B cell (primary cell): ENCODE measurements at regions of chr18 and their contacts with region 1.

Region 1: GRCh38 chr18:12990967-12991838 is at the start of gene CEP192:
- DNase-seq: peak; percentile 98
- ATAC-seq: peak; percentile 98
- H3K4me3 ChIP-seq: peak within 1 kb of the TSS; percentile 63 to 97 (median 84)
- H3K4me3 Mint-ChIP-seq: peak within 1 kb of the TSS; percentile 99
- H3K27ac ChIP-seq: peak within 1 kb of the TSS; percentile 67 to 88
- H3K27ac Mint-ChIP-seq: peak within 1 kb of the TSS; percentile 97
- H3K4me1 ChIP-seq: peaks cover 19 to 25% of the 10 kb centered on the region in 2 donors
- H3K4me1 Mint-ChIP-seq: peaks cover 36% of the 10 kb centered on the region
- H3K27me3 ChIP-seq: no peaks in the 10 kb centered on the region
- H3K27me3 Mint-ChIP-seq: no peaks in the 10 kb centered on the region
- CTCF ChIP-seq: peak; percentile 36
- total RNA-seq, gene CEP192: 44.3 and 47.3 TPM in 2 replicates

Region 2: GRCh38 chr18:12376718-12377555 is 614.3 kb before region 1 on chr18 and contains the start of gene AFG3L2:
- CTCF ChIA-PET with region 1: interaction called, 4 read pairs
- POLR2A ChIA-PET with region 1: no interaction called
- intact Hi-C with region 1: loop called (anchors 1 kb)
- DNase-seq: peak; percentile 100
- ATAC-seq: peak; percentile 87
- H3K4me3 ChIP-seq: peak within 1 kb of the TSS; percentile 46 to 82 (median 69)
- H3K4me3 Mint-ChIP-seq: peak within 1 kb of the TSS; percentile 92
- H3K27ac ChIP-seq: peak within 1 kb of the TSS; percentile 67 to 96
- H3K27ac Mint-ChIP-seq: peak within 1 kb of the TSS; percentile 88
- H3K4me1 ChIP-seq: peaks cover 10 to 22% of the 10 kb centered on the region in 2 donors
- H3K4me1 Mint-ChIP-seq: peaks cover 33% of the 10 kb centered on the region
- H3K27me3 ChIP-seq: no peaks in the 10 kb centered on the region
- H3K27me3 Mint-ChIP-seq: no peaks in the 10 kb centered on the region
- CTCF ChIP-seq: no peak
- total RNA-seq, gene AFG3L2: 39.2 and 40.7 TPM in 2 replicates

Region 3: DNA sequence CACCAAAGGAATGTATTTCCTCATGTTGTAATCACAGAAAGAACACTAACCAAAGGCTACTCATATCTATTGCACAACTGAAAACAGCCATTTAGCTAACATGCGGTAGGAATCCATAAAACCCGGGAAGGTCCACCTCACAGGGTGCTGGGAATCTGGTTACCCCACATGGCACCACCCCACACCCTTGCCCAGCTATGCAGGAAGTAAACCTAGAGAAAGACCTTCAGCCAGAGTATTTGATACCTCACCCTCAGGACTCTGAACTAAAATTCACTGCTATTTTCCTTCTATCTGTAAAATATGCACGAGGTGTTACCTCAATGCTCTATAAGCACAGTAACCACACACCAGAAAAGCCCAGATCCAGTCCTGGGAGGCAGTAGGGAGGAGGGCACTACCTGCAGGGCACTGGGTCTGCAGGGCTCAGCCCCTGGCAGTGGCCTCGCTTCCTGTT is 153.0 kb before region 1 on chr18:
- CTCF ChIA-PET with region 1: no interaction called
- POLR2A ChIA-PET with region 1: no interaction called
- intact Hi-C with region 1: loop called (anchors 5 kb)
- DNase-seq: peak; percentile 31
- ATAC-seq: no peak
- H3K4me3 ChIP-seq: peak overlapping the region in 2 of 5 experiments; percentile 15 to 38
- H3K4me3 Mint-ChIP-seq: peak overlapping the region; percentile 65
- H3K27ac ChIP-seq: peak overlapping the region; percentile 51 to 76
- H3K27ac Mint-ChIP-seq: peak overlapping the region; percentile 74
- H3K4me1 ChIP-seq: peaks cover 30 to 36% of the 10 kb centered on the region in 2 donors
- H3K4me1 Mint-ChIP-seq: peaks cover 39% of the 10 kb centered on the region
- H3K27me3 ChIP-seq: no peaks in the 10 kb centered on the region
- H3K27me3 Mint-ChIP-seq: no peaks in the 10 kb centered on the region
- CTCF ChIP-seq: no peak

Region 4: GRCh38 chr18:12947355-12948041 is 43.7 kb before region 1 on chr18 and contains the start of gene SEH1L:
- CTCF ChIA-PET with region 1: interaction called, 4 read pairs
- POLR2A ChIA-PET with region 1: interaction called, 8 read pairs
- intact Hi-C with region 1: loop called (anchors 1 kb)
- DNase-seq: no peak
- ATAC-seq: peak; percentile 91
- H3K4me3 ChIP-seq: peak within 1 kb of the TSS; percentile 69 to 97 (median 75)
- H3K4me3 Mint-ChIP-seq: peak within 1 kb of the TSS; percentile 96
- H3K27ac ChIP-seq: peak within 1 kb of the TSS; percentile 88 to 89
- H3K27ac Mint-ChIP-seq: peak within 1 kb of the TSS; percentile 94
- H3K4me1 ChIP-seq: peaks cover 5 to 22% of the 10 kb centered on the region in 2 donors
- H3K4me1 Mint-ChIP-seq: peaks cover 29% of the 10 kb centered on the region
- H3K27me3 ChIP-seq: no peaks in the 10 kb centered on the region
- H3K27me3 Mint-ChIP-seq: no peaks in the 10 kb centered on the region
- CTCF ChIP-seq: no peak
- total RNA-seq, gene SEH1L: 46.4 and 48.1 TPM in 2 replicates

Region 5: GRCh38 chr18:13137670-13138419 is 146.6 kb after region 1 on chr18:
- CTCF ChIA-PET with region 1: no interaction called
- POLR2A ChIA-PET with region 1: no interaction called
- intact Hi-C with region 1: loop called (anchors 1 kb)
- DNase-seq: peak; percentile 85
- ATAC-seq: peak; percentile 90
- H3K4me3 ChIP-seq: peak overlapping the region; percentile 58 to 98 (median 84)
- H3K4me3 Mint-ChIP-seq: peak overlapping the region; percentile 100
- H3K27ac ChIP-seq: peak overlapping the region; percentile 65 to 86
- H3K27ac Mint-ChIP-seq: peak overlapping the region; percentile 99
- H3K4me1 ChIP-seq: peaks cover 6 to 11% of the 10 kb centered on the region in 2 donors
- H3K4me1 Mint-ChIP-seq: peaks cover 24% of the 10 kb centered on the region
- H3K27me3 ChIP-seq: no peaks in the 10 kb centered on the region
- H3K27me3 Mint-ChIP-seq: no peaks in the 10 kb centered on the region
- CTCF ChIP-seq: no peak

Region 6: GRCh38 chr18:13726232-13726971 is 735.2 kb after region 1 on chr18 and contains the starts of genes FAM210A and RNMT:
- CTCF ChIA-PET with region 1: no interaction called
- POLR2A ChIA-PET with region 1: no interaction called
- intact Hi-C with region 1: loop called (anchors 1 kb)
- DNase-seq: peak; percentile 97
- ATAC-seq: peak; percentile 95
- H3K4me3 ChIP-seq: peak within 1 kb of the TSS; percentile 51 to 94 (median 88)
- H3K4me3 Mint-ChIP-seq: peak within 1 kb of the TSS; percentile 97
- H3K27ac ChIP-seq: peak within 1 kb of the TSS; percentile 83 to 94
- H3K27ac Mint-ChIP-seq: peak within 1 kb of the TSS; percentile 98
- H3K4me1 ChIP-seq: peaks cover 21 to 26% of the 10 kb centered on the region in 2 donors
- H3K4me1 Mint-ChIP-seq: peaks cover 48% of the 10 kb centered on the region
- H3K27me3 ChIP-seq: no peaks in the 10 kb centered on the region
- H3K27me3 Mint-ChIP-seq: no peaks in the 10 kb centered on the region
- CTCF ChIP-seq: peak; percentile 18
- total RNA-seq, gene FAM210A: 11.4 and 12.3 TPM in 2 replicates
- total RNA-seq, gene RNMT: 54.3 and 57.8 TPM in 2 replicates